Panc1 (cell line): ENCODE measurements at regions of chr4 and their contacts with region 1.

Region 1: GRCh38 chr4:183229397-183229796 is 90.7 kb downstream of the CLDN22 start:
- DNase-seq: no peak
- ATAC-seq: no peak
- H3K4me3 ChIP-seq: no peak overlapping the region
- H3K27ac ChIP-seq: no peak overlapping the region
- H3K4me1 ChIP-seq: no peaks in the 10 kb centered on the region
- H3K27me3 ChIP-seq: no peaks in the 10 kb centered on the region
- CTCF ChIP-seq: no peak

Region 2: GRCh38 chr4:181845617-181846016 is 1383.8 kb before region 1 on chr4:
- CTCF ChIA-PET with region 1: no interaction called
- POLR2A ChIA-PET with region 1: no interaction called
- in situ Hi-C with region 1: no loop called
- intact Hi-C with region 1: no loop called
- DNase-seq: no peak
- ATAC-seq: no peak
- H3K4me3 ChIP-seq: no peak overlapping the region
- H3K27ac ChIP-seq: no peak overlapping the region
- H3K4me1 ChIP-seq: no peaks in the 10 kb centered on the region
- H3K27me3 ChIP-seq: no peaks in the 10 kb centered on the region
- CTCF ChIP-seq: no peak

Region 3: GRCh38 chr4:183326853-183327252 is 97.5 kb after region 1 on chr4:
- CTCF ChIA-PET with region 1: no interaction called
- POLR2A ChIA-PET with region 1: interaction called, 10 read pairs
- in situ Hi-C with region 1: no loop called
- intact Hi-C with region 1: no loop called
- DNase-seq: no peak
- ATAC-seq: peak; percentile 70
- H3K4me3 ChIP-seq: no peak overlapping the region
- H3K27ac ChIP-seq: no peak overlapping the region
- H3K4me1 ChIP-seq: 0 out of 2 replicates have a peak, but pooled peaks cover 3% of the 10 kb centered on the region
- H3K27me3 ChIP-seq: no peaks in the 10 kb centered on the region
- CTCF ChIP-seq: no peak